B cell (primary cell): ENCODE measurements at regions of chr14 and their contacts with region 1.

Region 1: GRCh38 chr14:94136575-94137331 is 7.3 kb upstream of the IFI27L2 start:
- DNase-seq: peak; percentile 83
- ATAC-seq: peak; percentile 91
- H3K4me3 ChIP-seq: no peak overlapping the region
- H3K4me3 Mint-ChIP-seq: no peak overlapping the region
- H3K27ac ChIP-seq: no peak overlapping the region
- H3K27ac Mint-ChIP-seq: no peak overlapping the region
- H3K4me1 ChIP-seq: peaks cover 0 to 3% of the 10 kb centered on the region in 2 donors
- H3K4me1 Mint-ChIP-seq: peaks cover 2% of the 10 kb centered on the region
- H3K27me3 ChIP-seq: peaks cover 0 to 10% (median 1%) of the 10 kb centered on the region in 4 experiments
- H3K27me3 Mint-ChIP-seq: peaks cover 27% of the 10 kb centered on the region
- CTCF ChIP-seq: peak; percentile 94

Region 2: GRCh38 chr14:93977790-93978581 is 158.8 kb before region 1 on chr14:
- CTCF ChIA-PET with region 1: no interaction called
- POLR2A ChIA-PET with region 1: no interaction called
- intact Hi-C with region 1: no loop called
- DNase-seq: peak; percentile 78
- ATAC-seq: peak; percentile 80
- H3K4me3 ChIP-seq: no peak overlapping the region
- H3K4me3 Mint-ChIP-seq: no peak overlapping the region
- H3K27ac ChIP-seq: no peak overlapping the region
- H3K27ac Mint-ChIP-seq: peak overlapping the region; percentile 41
- H3K4me1 ChIP-seq: peaks cover 23 to 35% of the 10 kb centered on the region in 2 donors
- H3K4me1 Mint-ChIP-seq: peaks cover 33% of the 10 kb centered on the region
- H3K27me3 ChIP-seq: peaks cover 0 to 64% (median 36%) of the 10 kb centered on the region in 4 experiments
- H3K27me3 Mint-ChIP-seq: peaks cover 45% of the 10 kb centered on the region
- CTCF ChIP-seq: no peak

Region 3: GRCh38 chr14:94051115-94051514 is 85.6 kb before region 1 on chr14:
- CTCF ChIA-PET with region 1: interaction called, 22 read pairs
- POLR2A ChIA-PET with region 1: no interaction called
- intact Hi-C with region 1: no loop called
- DNase-seq: no peak
- ATAC-seq: no peak
- H3K4me3 ChIP-seq: no peak overlapping the region
- H3K4me3 Mint-ChIP-seq: no peak overlapping the region
- H3K27ac ChIP-seq: no peak overlapping the region
- H3K27ac Mint-ChIP-seq: no peak overlapping the region
- H3K4me1 ChIP-seq: no peaks in the 10 kb centered on the region
- H3K4me1 Mint-ChIP-seq: no peaks in the 10 kb centered on the region
- H3K27me3 ChIP-seq: no peaks in the 10 kb centered on the region
- H3K27me3 Mint-ChIP-seq: no peaks in the 10 kb centered on the region
- CTCF ChIP-seq: peak; percentile 8

Region 4: GRCh38 chr14:94066089-94066676 is 70.6 kb before region 1 on chr14:
- CTCF ChIA-PET with region 1: interaction called, 11 read pairs
- POLR2A ChIA-PET with region 1: no interaction called
- intact Hi-C with region 1: no loop called
- DNase-seq: no peak
- ATAC-seq: no peak
- H3K4me3 ChIP-seq: no peak overlapping the region
- H3K4me3 Mint-ChIP-seq: no peak overlapping the region
- H3K27ac ChIP-seq: no peak overlapping the region
- H3K27ac Mint-ChIP-seq: peak overlapping the region; percentile 32
- H3K4me1 ChIP-seq: peaks cover 0 to 3% of the 10 kb centered on the region in 2 donors
- H3K4me1 Mint-ChIP-seq: peaks cover 60% of the 10 kb centered on the region
- H3K27me3 ChIP-seq: no peaks in the 10 kb centered on the region
- H3K27me3 Mint-ChIP-seq: no peaks in the 10 kb centered on the region
- CTCF ChIP-seq: no peak

Region 5: GRCh38 chr14:94180655-94181271 is 44.0 kb after region 1 on chr14:
- CTCF ChIA-PET with region 1: interaction called, 39 read pairs
- POLR2A ChIA-PET with region 1: no interaction called
- intact Hi-C with region 1: loop called (anchors 1 kb)
- DNase-seq: peak; percentile 78
- ATAC-seq: peak; percentile 84
- H3K4me3 ChIP-seq: peak overlapping the region in 3 of 5 experiments; percentile 10 to 35 (median 20)
- H3K4me3 Mint-ChIP-seq: peak overlapping the region; percentile 8
- H3K27ac ChIP-seq: no peak overlapping the region
- H3K27ac Mint-ChIP-seq: peak overlapping the region; percentile 4
- H3K4me1 ChIP-seq: peaks cover 5 to 7% of the 10 kb centered on the region in 2 donors
- H3K4me1 Mint-ChIP-seq: peaks cover 6% of the 10 kb centered on the region
- H3K27me3 ChIP-seq: peaks cover 2 to 32% (median 17%) of the 10 kb centered on the region in 4 experiments
- H3K27me3 Mint-ChIP-seq: peaks cover 40% of the 10 kb centered on the region
- CTCF ChIP-seq: peak; percentile 82

Region 6: DNA sequence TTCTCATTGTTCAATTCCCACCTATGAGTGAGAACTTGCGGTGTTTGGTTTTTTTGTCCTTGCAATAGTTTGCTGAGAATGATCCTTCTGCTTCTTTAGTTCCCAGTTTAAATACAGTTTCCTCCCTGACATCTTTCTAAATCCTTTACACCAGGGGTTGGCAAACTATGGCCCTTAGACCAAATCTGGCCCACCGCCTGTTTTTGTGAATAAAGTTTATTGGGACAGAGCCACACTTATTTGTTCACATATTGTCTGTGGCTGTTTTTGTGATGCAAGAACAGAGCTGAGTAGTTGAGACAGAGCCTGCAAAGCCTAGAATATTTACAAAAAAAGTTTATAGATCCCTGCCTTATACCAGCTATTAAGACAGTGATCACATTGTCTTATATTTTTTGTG is 102.7 kb after region 1 on chr14:
- CTCF ChIA-PET with region 1: no interaction called
- POLR2A ChIA-PET with region 1: no interaction called
- intact Hi-C with region 1: no loop called
- DNase-seq: no peak
- ATAC-seq: no peak
- H3K4me3 ChIP-seq: no peak overlapping the region
- H3K4me3 Mint-ChIP-seq: no peak overlapping the region
- H3K27ac ChIP-seq: no peak overlapping the region
- H3K27ac Mint-ChIP-seq: no peak overlapping the region
- H3K4me1 ChIP-seq: no peaks in the 10 kb centered on the region
- H3K4me1 Mint-ChIP-seq: peaks cover 6% of the 10 kb centered on the region
- H3K27me3 ChIP-seq: no peaks in the 10 kb centered on the region
- H3K27me3 Mint-ChIP-seq: peaks cover 8% of the 10 kb centered on the region
- CTCF ChIP-seq: no peak

Region 7: DNA sequence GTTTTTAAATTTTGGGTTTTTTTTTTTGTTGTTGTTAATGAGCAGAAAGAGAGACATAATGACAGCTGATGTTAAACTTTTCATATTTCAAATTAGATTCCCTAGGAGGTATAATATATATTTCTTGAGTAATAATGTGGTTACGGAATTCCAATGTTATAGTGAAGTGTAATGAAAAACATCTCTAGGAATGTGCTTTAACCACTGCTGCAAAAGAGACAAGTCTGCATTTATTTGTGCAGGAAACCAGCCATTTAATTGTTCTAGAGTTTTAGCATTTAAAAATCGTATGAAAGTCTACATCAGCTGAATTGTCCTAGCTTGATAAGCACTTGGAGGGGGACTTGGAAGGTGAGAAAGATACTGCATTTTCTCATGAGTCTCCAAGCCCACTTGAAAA is 142.0 kb after region 1 on chr14:
- CTCF ChIA-PET with region 1: no interaction called
- POLR2A ChIA-PET with region 1: no interaction called
- intact Hi-C with region 1: no loop called
- DNase-seq: no peak
- ATAC-seq: no peak
- H3K4me3 ChIP-seq: no peak overlapping the region
- H3K4me3 Mint-ChIP-seq: no peak overlapping the region
- H3K27ac ChIP-seq: no peak overlapping the region
- H3K27ac Mint-ChIP-seq: no peak overlapping the region
- H3K4me1 ChIP-seq: no peaks in the 10 kb centered on the region
- H3K4me1 Mint-ChIP-seq: no peaks in the 10 kb centered on the region
- H3K27me3 ChIP-seq: no peaks in the 10 kb centered on the region
- H3K27me3 Mint-ChIP-seq: peaks cover 9% of the 10 kb centered on the region
- CTCF ChIP-seq: no peak

Region 8: DNA sequence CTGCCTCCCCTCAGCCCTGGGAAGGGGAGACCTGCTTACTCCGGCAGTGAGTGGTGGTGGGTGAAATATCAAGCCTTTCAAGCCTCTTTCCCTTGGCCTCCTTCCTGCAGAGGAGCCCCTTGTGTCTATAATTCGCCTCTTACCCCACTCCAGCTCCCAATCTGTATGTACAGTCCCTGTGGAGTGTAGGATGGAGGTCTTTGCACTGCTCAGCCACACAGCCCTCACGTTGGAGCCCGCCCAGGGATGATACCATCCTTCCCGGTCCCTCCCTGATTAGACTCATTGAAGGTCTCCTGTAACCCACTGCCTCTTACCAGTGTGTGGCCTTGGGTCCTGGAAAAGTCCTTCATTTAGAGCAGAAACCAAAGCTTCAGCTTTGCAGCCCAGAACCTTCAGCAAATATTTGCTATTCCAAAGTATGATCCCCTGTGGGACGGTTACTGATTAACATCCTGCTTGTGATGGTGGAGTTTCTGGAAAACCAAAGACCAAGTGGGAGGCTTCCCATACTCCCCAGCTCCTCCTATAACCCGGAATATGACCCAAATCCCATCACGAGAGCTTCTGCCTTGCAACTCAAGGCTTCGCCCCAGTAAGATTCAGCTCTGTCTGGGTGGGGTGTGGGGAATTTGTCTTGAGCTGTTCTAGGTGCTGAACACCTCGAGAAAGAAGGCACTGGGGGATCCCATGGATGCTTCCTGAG is 156.3 kb after region 1 on chr14 and contains the start of gene SERPINA10:
- CTCF ChIA-PET with region 1: no interaction called
- POLR2A ChIA-PET with region 1: no interaction called
- intact Hi-C with region 1: no loop called
- DNase-seq: no peak
- ATAC-seq: no peak
- H3K4me3 ChIP-seq: no peak within 1 kb of the TSS
- H3K4me3 Mint-ChIP-seq: no peak within 1 kb of the TSS
- H3K27ac ChIP-seq: no peak within 1 kb of the TSS
- H3K27ac Mint-ChIP-seq: no peak within 1 kb of the TSS
- H3K4me1 ChIP-seq: no peaks in the 10 kb centered on the region
- H3K4me1 Mint-ChIP-seq: no peaks in the 10 kb centered on the region
- H3K27me3 ChIP-seq: no peaks in the 10 kb centered on the region
- H3K27me3 Mint-ChIP-seq: peaks cover 3% of the 10 kb centered on the region
- CTCF ChIP-seq: no peak
- total RNA-seq, gene SERPINA10: not detected in 2 replicates